PC-3 (cell line): ENCODE measurements at regions of chr13 and their contacts with region 1.

Region 1: DNA sequence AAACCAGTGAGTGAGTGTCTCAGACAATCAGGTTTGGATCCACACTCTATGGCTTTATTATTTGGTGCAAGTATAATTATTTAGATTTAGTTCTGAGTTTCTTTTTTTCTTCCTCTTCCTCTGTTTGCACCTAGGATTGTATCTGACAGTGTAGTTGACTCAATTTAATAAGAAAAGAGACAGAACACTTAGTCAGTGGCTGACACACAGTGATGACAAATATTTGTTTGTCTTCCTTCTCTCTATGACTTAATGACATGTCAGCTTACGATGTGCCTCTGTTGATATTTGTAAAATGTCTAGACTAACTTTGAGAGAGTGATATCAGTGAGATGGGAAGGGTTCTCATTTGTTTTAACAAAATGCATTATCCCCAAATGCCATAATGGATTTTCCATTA is 129.5 kb upstream of the SLC10A2 start:
- DNase-seq: peak; percentile 54
- ATAC-seq: peak; percentile 68
- H3K4me3 ChIP-seq: no peak overlapping the region
- H3K27ac ChIP-seq: peak overlapping the region; percentile 42
- H3K4me1 ChIP-seq: peaks cover 12% of the 10 kb centered on the region
- H3K27me3 ChIP-seq: no peaks in the 10 kb centered on the region
- CTCF ChIP-seq: no peak

Region 2: GRCh38 chr13:103272770-103273169 is 77.0 kb after region 1 on chr13:
- CTCF ChIA-PET with region 1: no interaction called
- POLR2A ChIA-PET with region 1: no interaction called
- intact Hi-C with region 1: loop called (anchors 5 kb)
- DNase-seq: peak; percentile 67
- ATAC-seq: peak; percentile 99
- H3K4me3 ChIP-seq: no peak overlapping the region
- H3K27ac ChIP-seq: peak overlapping the region; percentile 85
- H3K4me1 ChIP-seq: peaks cover 19% of the 10 kb centered on the region
- H3K27me3 ChIP-seq: no peaks in the 10 kb centered on the region
- CTCF ChIP-seq: no peak

Region 3: DNA sequence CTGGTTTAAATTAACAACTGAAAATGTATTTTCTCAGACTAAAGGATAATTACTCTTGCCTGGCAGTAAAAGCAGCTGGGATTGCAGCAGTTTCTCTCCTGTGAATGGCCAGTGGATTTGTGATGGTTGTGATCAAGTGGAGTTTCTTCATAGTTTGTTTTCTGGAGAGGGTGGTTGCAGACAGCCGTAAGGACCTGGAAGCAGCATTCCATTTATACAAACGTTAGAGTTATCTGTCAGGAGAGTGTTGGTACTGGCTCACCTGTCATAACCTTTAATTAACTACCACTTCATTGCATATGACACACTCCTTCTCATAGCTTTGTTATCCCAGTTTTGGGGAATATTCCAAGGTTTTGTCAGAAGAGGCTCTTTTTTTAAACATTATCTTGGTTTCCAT is 128.9 kb after region 1 on chr13:
- CTCF ChIA-PET with region 1: no interaction called
- POLR2A ChIA-PET with region 1: no interaction called
- intact Hi-C with region 1: loop called (anchors 5 kb)
- DNase-seq: no peak
- ATAC-seq: no peak
- H3K4me3 ChIP-seq: no peak overlapping the region
- H3K27ac ChIP-seq: no peak overlapping the region
- H3K4me1 ChIP-seq: no peaks in the 10 kb centered on the region
- H3K27me3 ChIP-seq: no peaks in the 10 kb centered on the region
- CTCF ChIP-seq: no peak